ENCODE measurements at regions of chr1 and their contacts with region 1.

Region 1: GRCh38 chr1:180540697-180541594 is 17.8 kb upstream of the OVAAL start:
- DNase-seq: no peak
- ATAC-seq: peak; percentile 31 to 84 (median 68)
- H3K4me3 ChIP-seq: no peak overlapping the region
- H3K27ac ChIP-seq: peak overlapping the region; percentile 51 to 90 (median 80)
- H3K4me1 ChIP-seq: peaks cover 11 to 58% (median 33%) of the 10 kb centered on the region in 9 donors
- H3K27me3 ChIP-seq: no peaks in the 10 kb centered on the region
- CTCF ChIP-seq: no peak

Region 2: GRCh38 chr1:180386745-180387367 is 154.1 kb before region 1 on chr1:
- intact Hi-C with region 1: no loop called
- DNase-seq: no peak
- ATAC-seq: no peak
- H3K4me3 ChIP-seq: no peak overlapping the region
- H3K27ac ChIP-seq: no peak overlapping the region
- H3K4me1 ChIP-seq: no peaks in the 10 kb centered on the region
- H3K27me3 ChIP-seq: no peaks in the 10 kb centered on the region
- CTCF ChIP-seq: no peak

Region 3: DNA sequence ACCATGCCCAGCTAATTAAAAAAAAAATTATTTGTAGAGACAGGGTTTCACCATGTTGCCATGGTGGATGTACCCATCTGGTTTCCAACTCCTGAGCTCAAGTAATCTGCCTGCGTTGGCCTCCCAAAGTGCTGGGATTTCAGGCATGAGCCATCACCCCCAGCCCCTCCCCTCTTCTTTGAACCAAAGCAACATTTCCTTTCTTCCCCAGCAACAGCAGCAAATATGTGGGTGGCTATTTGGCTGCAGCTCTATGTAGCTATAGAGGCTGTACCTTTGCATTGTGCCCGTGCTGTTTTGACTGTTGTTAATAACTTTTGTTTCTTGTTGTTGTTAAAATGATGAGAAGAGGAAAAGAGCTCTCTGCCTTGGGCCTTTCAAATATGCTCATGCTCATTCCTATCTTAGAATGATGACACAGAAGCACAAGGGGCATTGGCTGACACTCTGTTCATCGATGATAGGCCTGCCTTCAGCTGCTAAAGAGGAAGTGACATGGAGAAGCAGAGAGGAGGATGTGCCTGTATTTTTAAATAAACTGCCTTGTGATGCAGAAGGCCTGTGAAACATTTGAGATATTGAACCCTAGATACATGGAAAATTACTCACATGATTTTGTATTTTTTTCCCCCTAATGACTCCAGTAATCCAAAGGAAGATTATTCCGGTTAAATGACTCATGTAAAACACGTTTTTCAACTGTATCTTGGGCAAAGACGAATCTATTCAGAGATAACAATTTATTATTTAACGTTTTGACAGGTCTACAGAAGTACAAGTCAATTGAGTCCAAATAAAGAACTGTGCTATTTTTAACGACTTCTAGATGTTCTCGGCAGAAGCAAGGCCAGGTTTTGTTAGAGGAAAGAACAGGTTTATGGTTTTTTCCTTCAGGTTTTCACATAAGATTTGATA is 70.3 kb after region 1 on chr1:
- intact Hi-C with region 1: loop called in 1 of 10 experiments (anchors 10 kb)
- DNase-seq: peak in 1 of 2 donors; percentile 66
- ATAC-seq: peak; percentile 70 to 95 (median 90)
- H3K4me3 ChIP-seq: no peak overlapping the region
- H3K27ac ChIP-seq: peak overlapping the region; percentile 38 to 86 (median 75)
- H3K4me1 ChIP-seq: peaks cover 0 to 38% (median 19%) of the 10 kb centered on the region in 9 donors
- H3K27me3 ChIP-seq: no peaks in the 10 kb centered on the region
- CTCF ChIP-seq: no peak

Region 4: DNA sequence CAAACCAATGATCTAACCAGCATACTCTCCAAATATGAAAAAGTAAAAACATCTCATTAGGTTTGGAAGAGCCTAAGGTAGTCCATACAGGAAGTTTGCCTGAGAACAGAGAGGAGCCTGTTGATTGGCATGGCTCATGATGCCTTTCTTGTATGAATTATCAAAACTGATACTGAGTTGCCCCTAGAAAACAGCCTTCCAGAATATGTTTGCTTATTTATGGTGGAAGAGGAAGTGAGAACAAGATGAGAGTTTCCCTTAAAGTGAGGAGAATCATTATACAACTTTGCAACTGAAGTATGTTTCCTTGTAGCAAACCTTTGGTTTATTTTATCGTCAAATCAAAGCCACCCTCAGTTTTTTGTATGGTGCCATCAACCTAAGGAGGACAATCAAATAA is 347.9 kb after region 1 on chr1:
- intact Hi-C with region 1: no loop called
- DNase-seq: no peak
- ATAC-seq: no peak
- H3K4me3 ChIP-seq: no peak overlapping the region
- H3K27ac ChIP-seq: no peak overlapping the region
- H3K4me1 ChIP-seq: peaks cover 0 to 15% (median 0%) of the 10 kb centered on the region in 9 donors
- H3K27me3 ChIP-seq: no peaks in the 10 kb centered on the region
- CTCF ChIP-seq: no peak